A549 (cell line): ENCODE measurements at regions of chrX and their contacts with region 1.

Region 1: GRCh38 chrX:10769195-10769594 is 148.8 kb upstream of the MID1 start:
- DNase-seq: peak; percentile 32 to 46
- ATAC-seq: peak; percentile 82 to 94
- H3K4me3 ChIP-seq: no peak overlapping the region
- H3K27ac ChIP-seq: no peak overlapping the region; a peak in 1 of 6 replicates
- H3K4me1 ChIP-seq: peaks cover 18% of the 10 kb centered on the region
- CTCF ChIP-seq: peak; percentile 61
- EP300 ChIP-seq: no peak
- POLR2A ChIP-seq: no peak
- RAD21 ChIP-seq: peak; percentile 46 to 60; a peak in 4 of 5 replicates

Region 2: GRCh38 chrX:10548681-10549080 is 220.5 kb before region 1 on chrX:
- CTCF ChIA-PET with region 1: no interaction called
- POLR2A ChIA-PET with region 1: no interaction called
- DNase-seq: no peak
- ATAC-seq: no peak; a peak in 1 of 6 replicates
- H3K4me3 ChIP-seq: no peak overlapping the region
- H3K27ac ChIP-seq: peak overlapping the region; percentile 18 to 36; a peak in 2 of 6 replicates
- H3K4me1 ChIP-seq: peaks cover 74% of the 10 kb centered on the region
- CTCF ChIP-seq: no peak
- EP300 ChIP-seq: no peak
- POLR2A ChIP-seq: no peak
- RAD21 ChIP-seq: no peak

Region 3: DNA sequence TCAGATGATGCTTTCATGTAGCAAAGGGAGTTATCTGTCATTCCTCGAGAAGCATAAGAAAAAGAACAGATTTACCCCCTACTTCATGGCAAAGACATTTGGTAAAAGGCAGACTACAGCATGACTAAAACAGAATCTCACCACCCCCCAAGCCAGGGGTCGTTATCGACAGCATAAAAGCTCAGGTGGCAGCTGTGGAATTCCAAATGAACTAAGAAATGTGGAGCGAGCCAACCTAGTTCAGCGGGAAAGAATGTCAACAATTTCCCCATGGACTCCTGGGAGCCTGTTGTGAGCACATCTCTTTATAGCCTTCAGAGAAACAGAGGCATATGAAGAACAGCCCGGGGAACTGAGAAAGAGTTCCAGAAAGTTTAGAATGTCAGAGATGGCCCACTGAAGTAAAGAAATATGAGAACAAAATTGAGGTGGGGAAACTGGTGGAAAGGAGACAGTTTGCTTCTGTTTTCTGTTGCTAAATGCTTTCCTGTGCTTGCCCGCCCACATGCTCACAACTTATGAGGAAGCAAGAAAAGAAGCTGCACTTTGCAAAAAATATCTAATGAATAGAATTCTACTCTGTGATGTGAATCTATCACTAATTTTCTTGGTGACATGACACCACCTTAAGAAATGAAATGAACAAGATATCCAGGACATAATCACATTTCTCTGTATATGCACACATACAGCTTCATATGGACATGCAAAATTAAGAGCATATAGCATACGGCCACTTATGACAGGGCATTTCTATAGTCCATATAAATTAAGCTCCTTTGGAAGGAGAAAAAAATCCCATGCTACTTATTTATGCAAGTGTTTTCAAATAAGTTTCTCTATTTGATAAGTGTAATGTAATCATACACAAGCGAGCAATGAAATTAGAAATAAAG is 13.5 kb before region 1 on chrX:
- CTCF ChIA-PET with region 1: interaction called, 11 read pairs
- POLR2A ChIA-PET with region 1: no interaction called
- DNase-seq: peak; percentile 39 to 45
- ATAC-seq: peak; percentile 66 to 90; a peak in 5 of 6 replicates
- H3K4me3 ChIP-seq: peak overlapping the region; percentile 9; the same call in 1 of the 3 replicates
- H3K27ac ChIP-seq: peak overlapping the region; percentile 56 to 74
- H3K4me1 ChIP-seq: peaks cover 35% of the 10 kb centered on the region
- CTCF ChIP-seq: no peak
- EP300 ChIP-seq: no peak
- POLR2A ChIP-seq: no peak
- RAD21 ChIP-seq: no peak

Region 4: DNA sequence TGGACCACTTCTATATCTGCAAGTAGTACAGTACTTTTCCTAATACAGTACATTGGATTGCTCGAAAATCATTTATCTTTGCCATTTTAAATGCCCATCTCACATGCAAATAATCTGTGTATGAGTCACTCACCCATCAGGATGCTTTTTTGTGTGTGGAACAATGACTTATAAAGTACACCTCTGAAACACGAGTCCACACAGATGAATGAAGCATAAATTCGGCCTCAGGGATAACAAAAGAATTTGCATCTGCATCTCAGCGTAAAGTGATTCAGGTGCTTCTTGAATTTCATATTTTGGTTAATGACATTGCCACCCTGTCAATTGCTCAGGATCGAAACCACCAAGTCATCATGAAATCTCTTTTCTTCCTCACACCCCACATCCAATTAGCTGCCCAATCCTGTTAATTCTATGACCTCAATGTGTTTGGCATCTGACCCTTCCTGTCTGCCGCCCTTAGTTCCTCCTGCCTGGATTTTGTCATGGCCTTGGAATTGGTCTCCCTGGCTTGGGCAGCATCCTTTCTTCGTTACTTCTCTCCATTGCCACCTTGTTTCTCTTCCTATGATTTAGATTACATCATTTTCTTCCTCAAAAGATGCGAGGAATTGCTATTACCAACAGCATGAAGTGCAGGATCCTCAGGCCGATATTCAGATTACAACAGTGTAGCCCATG is 12.8 kb after region 1 on chrX:
- CTCF ChIA-PET with region 1: interaction called, 10 read pairs
- POLR2A ChIA-PET with region 1: no interaction called
- DNase-seq: no peak
- ATAC-seq: no peak
- H3K4me3 ChIP-seq: no peak overlapping the region
- H3K27ac ChIP-seq: no peak overlapping the region
- H3K4me1 ChIP-seq: no peaks in the 10 kb centered on the region
- CTCF ChIP-seq: no peak
- EP300 ChIP-seq: no peak
- POLR2A ChIP-seq: no peak
- RAD21 ChIP-seq: no peak